ENCODE measurements at regions of chr5 and their contacts with region 1.

Region 1: GRCh38 chr5:154857530-154858296 is 714 bp upstream of the CNOT8 start:
- DNase-seq: peak; percentile 99
- H3K4me3 Mint-ChIP-seq: peak overlapping the region; percentile 85
- H3K27ac Mint-ChIP-seq: peak overlapping the region; percentile 95
- H3K4me1 Mint-ChIP-seq: peaks cover 36% of the 10 kb centered on the region
- H3K27me3 Mint-ChIP-seq: no peaks in the 10 kb centered on the region
- CTCF ChIP-seq: no peak

Region 2: DNA sequence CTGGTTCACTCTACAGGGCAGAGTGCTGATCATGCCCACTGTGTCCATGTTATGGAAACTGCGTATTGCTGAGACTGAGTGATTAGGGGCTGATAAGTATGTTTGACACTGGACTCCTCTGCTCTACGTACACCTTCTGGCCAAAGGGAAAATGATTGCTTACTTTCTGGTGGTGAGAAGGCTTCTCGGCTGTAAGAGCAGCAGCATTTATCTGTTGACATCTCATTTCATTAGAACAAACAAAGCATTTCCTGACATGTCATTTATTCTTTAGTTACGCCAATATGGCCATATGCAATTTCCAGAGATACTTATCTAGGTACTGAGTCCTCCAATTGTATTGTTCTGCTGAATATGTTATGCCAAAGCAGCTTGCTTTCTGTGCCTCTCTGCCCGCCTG is 12.9 kb before region 1 on chr5:
- CTCF ChIA-PET with region 1: interaction called, 4 read pairs
- POLR2A ChIA-PET with region 1: interaction called, 20 read pairs
- intact Hi-C with region 1: no loop called
- DNase-seq: no peak
- H3K4me3 Mint-ChIP-seq: no peak overlapping the region
- H3K27ac Mint-ChIP-seq: no peak overlapping the region
- H3K4me1 Mint-ChIP-seq: peaks cover 10% of the 10 kb centered on the region
- H3K27me3 Mint-ChIP-seq: no peaks in the 10 kb centered on the region
- CTCF ChIP-seq: no peak

Region 3: DNA sequence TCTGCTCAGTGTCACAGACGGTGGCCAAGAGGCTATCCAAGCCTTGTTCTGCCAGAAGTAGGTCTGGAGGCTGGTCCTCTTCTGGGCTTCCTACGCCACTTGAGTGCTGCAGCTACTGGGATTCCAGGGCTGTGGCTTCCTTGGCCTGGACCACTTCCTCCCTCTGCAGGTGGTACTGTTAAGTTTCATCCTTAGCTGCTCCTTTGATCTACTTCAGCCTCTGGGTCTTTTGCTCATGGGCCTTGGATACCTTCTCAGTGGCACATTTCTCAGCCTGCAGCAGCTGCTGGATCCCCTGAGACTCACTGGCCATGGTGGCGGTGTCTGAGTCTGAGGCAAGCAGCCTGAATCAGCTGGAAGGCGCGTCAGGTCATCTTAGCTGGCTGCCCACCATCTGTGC is 11.0 kb after region 1 on chr5:
- CTCF ChIA-PET with region 1: no interaction called
- POLR2A ChIA-PET with region 1: interaction called, 10 read pairs
- intact Hi-C with region 1: no loop called
- DNase-seq: peak; percentile 38
- H3K4me3 Mint-ChIP-seq: no peak overlapping the region
- H3K27ac Mint-ChIP-seq: no peak overlapping the region
- H3K4me1 Mint-ChIP-seq: peaks cover 12% of the 10 kb centered on the region
- H3K27me3 Mint-ChIP-seq: no peaks in the 10 kb centered on the region
- CTCF ChIP-seq: peak; percentile 25